CD8-positive, alpha-beta T cell (primary cell): ENCODE measurements at regions of chr16 and their contacts with region 1.

Region 1: DNA sequence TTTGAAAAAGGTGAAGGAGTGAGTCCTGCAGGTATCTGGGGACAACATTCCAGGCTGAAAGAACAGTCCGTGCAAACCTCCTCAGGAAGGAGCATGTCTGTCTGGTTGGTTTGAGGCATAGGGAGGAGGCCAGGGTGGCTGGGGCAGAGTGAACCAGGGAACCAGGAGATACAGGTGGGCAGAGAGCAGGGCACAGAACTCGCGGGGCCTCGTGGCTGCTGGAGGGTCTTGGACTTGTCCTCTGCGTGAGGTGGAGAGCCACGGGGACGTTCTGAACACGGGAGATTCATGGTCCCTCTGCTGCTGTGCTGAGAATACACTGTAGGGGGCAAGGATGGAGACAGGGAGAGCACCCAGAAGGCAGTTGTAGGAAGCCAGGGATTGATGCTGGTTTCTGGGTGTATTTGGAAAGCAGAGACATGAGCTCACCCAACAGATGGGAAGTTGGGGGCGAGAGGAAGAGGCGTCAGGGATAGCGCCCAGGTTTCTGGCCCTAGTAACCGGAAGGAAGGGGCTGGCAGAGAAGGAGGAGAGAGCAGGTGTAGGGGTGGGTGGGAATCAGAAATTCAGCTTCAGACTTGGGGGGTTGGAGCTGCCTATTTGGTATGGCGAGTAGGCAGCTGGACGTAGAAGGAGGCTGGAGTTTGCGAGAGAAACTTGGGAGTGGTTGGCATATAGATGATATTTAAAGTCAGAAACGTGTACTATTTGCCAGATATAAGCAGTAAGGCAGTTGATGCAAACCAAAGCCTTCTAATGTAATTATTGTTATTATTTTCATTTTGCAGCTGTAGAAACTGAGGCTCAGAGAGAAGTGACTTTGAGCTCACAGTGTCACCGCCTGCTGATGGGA is at the start of gene CCL17:
- DNase-seq: no peak
- ATAC-seq: no peak
- H3K4me3 ChIP-seq: no peak within 1 kb of the TSS
- H3K4me3 Mint-ChIP-seq: no peak within 1 kb of the TSS
- H3K27ac ChIP-seq: no peak within 1 kb of the TSS
- H3K27ac Mint-ChIP-seq: peak within 1 kb of the TSS; percentile 8
- H3K4me1 ChIP-seq: no peaks in the 10 kb centered on the region
- H3K4me1 Mint-ChIP-seq: no peaks in the 10 kb centered on the region
- H3K27me3 ChIP-seq: no peaks in the 10 kb centered on the region
- H3K27me3 Mint-ChIP-seq: peaks cover 2% of the 10 kb centered on the region
- CTCF ChIP-seq: no peak
- total RNA-seq, gene CCL17: not detected

Region 2: DNA sequence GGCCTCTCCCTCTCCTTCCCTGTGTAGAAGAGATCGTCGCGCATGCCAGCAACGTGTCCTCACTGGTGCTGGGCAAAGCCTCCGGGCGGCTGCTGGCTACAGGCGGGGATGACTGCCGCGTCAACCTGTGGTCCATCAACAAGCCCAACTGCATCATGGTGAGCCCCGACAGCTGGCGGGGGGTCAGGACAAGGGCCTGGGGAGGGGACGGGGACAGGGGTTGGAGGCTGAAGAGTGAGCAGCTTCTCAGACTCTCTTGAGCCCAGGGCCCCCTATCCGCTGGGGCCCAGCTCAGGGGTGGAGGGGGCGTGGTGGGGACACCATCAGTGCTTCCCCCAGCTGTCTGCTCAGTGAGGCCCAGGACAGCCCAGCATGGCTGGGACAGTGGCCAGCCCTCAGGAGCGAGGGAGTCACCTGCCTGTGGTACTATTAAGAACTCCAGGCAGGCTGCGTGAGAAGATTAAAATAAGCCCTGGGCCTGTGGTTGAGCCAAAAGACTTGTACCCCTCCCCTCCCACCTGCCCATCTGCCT is 337.5 kb after region 1 on chr16:
- CTCF ChIA-PET with region 1: no interaction called
- POLR2A ChIA-PET with region 1: no interaction called
- intact Hi-C with region 1: no loop called
- DNase-seq: no peak
- ATAC-seq: no peak
- H3K4me3 ChIP-seq: no peak overlapping the region
- H3K4me3 Mint-ChIP-seq: no peak overlapping the region
- H3K27ac ChIP-seq: no peak overlapping the region
- H3K27ac Mint-ChIP-seq: no peak overlapping the region
- H3K4me1 ChIP-seq: peaks cover 9% of the 10 kb centered on the region
- H3K4me1 Mint-ChIP-seq: peaks cover 12% of the 10 kb centered on the region
- H3K27me3 ChIP-seq: no peaks in the 10 kb centered on the region
- H3K27me3 Mint-ChIP-seq: no peaks in the 10 kb centered on the region
- CTCF ChIP-seq: no peak

Region 3: DNA sequence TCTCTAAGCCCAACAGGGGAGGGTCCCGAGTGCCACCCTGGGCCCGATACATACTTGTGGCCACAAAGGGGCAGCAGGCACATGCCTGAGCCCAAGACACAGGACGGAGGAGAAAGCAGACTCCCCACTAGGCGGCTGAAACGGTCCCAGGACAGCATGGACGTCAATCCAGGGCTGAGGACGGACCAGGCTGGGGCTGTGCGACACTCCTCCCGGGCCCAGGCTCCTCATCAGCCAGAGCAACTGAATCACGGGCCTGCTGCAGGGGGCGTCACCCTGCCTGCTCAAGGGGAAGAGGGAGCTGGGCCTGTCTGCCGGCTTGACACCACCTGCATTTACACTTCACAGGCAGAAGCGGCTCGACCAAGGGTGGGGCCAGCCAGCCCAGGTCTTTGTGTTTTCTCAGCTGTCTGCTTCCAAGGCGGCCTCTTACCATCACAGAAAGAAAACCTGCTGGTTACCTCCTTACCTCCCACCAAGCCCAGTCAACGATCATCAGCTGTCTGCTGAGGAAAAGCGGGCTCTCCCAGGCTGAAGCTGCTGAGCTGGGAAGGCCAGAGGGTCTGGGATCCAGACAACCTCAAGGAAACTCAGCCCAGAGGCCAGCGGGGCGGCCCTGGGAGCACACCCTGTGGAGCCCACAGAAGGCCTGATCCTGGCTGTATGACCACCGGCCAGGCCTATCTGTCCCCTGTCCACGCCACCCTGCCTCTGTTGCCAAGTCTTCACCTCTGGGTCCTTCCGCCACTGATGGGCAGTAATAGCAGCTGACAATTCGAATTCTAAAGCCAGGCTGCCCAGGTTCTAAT is 371.7 kb after region 1 on chr16:
- CTCF ChIA-PET with region 1: no interaction called
- POLR2A ChIA-PET with region 1: no interaction called
- intact Hi-C with region 1: loop called in 1 of 2 experiments (anchors 5 kb)
- DNase-seq: no peak
- ATAC-seq: no peak
- H3K4me3 ChIP-seq: no peak overlapping the region
- H3K4me3 Mint-ChIP-seq: no peak overlapping the region
- H3K27ac ChIP-seq: no peak overlapping the region
- H3K27ac Mint-ChIP-seq: no peak overlapping the region
- H3K4me1 ChIP-seq: no peaks in the 10 kb centered on the region
- H3K4me1 Mint-ChIP-seq: no peaks in the 10 kb centered on the region
- H3K27me3 ChIP-seq: no peaks in the 10 kb centered on the region
- H3K27me3 Mint-ChIP-seq: no peaks in the 10 kb centered on the region
- CTCF ChIP-seq: no peak